Transverse colon (tissue), 4 donors: ENCODE measurements at regions of chr7 and their contacts with region 1.

Region 1: DNA sequence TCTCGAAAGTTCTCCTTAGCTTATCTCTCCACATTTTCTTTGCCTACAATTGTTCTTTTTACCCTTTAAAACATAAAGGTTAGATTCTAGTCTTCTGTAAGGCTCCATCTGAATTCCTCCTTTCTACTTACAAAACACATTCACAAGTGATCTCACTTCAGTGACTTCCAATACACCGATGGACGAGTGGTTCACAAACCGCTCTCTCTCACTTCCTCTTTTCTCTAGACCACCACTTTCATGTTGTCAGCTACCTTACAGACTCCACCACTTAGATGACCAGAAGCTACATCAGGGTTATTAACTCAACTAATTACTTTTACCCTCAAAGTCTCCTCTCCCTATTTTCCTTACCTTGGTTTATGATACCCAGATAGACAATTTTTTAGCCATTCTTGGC is 11.8 kb downstream of the MET start:
- DNase-seq: no peak
- H3K4me3 ChIP-seq: no peak overlapping the region
- H3K27ac ChIP-seq: no peak overlapping the region
- H3K4me1 ChIP-seq: peaks cover 0 to 3% (median 0%) of the 10 kb centered on the region in 4 donors
- H3K27me3 ChIP-seq: no peaks in the 10 kb centered on the region
- CTCF ChIP-seq: no peak
- EP300 ChIP-seq: no peak
- POLR2A ChIP-seq: no peak

Region 2: DNA sequence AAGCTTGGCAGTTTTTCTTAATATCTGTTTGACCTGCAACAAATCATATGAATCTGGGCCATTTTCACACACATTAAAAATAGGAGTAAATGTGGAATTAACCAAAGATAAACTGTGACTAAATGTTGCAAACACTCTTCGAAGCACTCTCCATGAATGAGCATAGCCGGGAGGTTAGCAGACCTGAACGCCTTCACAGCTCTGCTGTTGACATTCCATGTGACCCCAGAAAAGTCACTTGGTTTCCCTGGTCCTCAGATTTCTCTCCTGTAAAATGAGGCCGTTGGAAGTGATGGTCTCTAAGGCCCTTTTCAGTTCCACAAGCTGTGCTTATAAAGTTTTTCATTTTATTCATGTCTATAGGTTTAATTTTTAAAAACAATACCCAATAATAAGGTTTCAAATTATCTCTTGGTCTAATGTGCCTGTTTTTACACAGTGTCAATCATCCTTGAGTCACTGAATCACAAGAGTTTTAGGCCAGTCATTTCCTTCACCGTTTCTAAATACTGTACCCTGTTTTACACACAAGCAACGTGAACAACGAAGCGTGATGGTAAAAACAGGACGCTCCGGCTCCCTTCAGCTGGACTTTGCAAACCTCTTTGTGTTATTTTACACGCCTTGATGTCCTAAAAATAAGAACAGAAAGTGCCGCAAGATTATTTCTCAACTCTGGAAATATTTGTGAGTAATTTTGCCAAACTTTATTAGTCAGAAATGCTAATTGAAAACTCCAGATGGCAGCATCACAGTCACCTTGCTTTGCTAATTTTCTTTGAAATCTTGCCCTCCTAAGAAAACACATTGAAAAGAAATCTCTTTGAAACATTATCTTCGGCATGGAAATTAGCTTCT is 50.4 kb before region 1 on chr7:
- in situ Hi-C with region 1: no loop called
- intact Hi-C with region 1: loop called (anchors 2 kb)
- DNase-seq: no peak
- H3K4me3 ChIP-seq: no peak overlapping the region
- H3K27ac ChIP-seq: no peak overlapping the region
- H3K4me1 ChIP-seq: peaks cover 0 to 29% (median 17%) of the 10 kb centered on the region in 4 donors
- H3K27me3 ChIP-seq: no peaks in the 10 kb centered on the region
- CTCF ChIP-seq: no peak
- EP300 ChIP-seq: no peak
- POLR2A ChIP-seq: no peak